Thyroid gland (tissue), 4 donors: ENCODE measurements at regions of chr5 and their contacts with region 1.

Region 1: DNA sequence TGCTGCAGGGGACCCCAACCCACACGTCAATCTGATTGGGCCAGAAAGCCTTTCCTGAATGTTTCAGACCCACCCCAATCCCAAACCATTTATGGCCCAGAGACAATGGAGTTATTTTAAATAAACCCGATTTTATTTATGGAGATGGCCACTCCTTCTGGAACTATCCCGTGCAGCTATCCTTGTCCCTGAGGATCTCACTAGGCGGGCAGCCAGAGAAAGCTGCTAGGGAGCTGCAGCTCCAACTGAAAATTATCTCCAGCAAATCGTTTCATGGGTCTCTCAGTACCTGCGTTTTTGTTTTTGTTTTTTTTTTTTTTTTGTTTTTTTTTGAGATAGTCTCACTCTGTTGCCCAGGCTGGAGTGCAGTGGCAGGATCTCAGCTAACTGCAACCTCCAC is 23.0 kb downstream of the C1QTNF2 start:
- DNase-seq: no peak
- H3K4me3 ChIP-seq: no peak overlapping the region
- H3K27ac ChIP-seq: no peak overlapping the region
- H3K4me1 ChIP-seq: peaks cover 0 to 4% of the 10 kb centered on the region in 2 donors
- H3K27me3 ChIP-seq: no peaks in the 10 kb centered on the region
- CTCF ChIP-seq: no peak
- POLR2A ChIP-seq: no peak

Region 2: GRCh38 chr5:160021831-160022446 is 325.5 kb before region 1 on chr5:
- intact Hi-C with region 1: loop called (anchors 5 kb)
- DNase-seq: peak; percentile 42 to 49
- H3K4me3 ChIP-seq: no peak overlapping the region
- H3K27ac ChIP-seq: no peak overlapping the region
- H3K4me1 ChIP-seq: peaks cover 7 to 15% of the 10 kb centered on the region in 2 donors
- H3K27me3 ChIP-seq: no peaks in the 10 kb centered on the region
- CTCF ChIP-seq: peak; percentile 64 to 89 (median 79)
- POLR2A ChIP-seq: no peak

Region 3: GRCh38 chr5:160199410-160199911 is 148.0 kb before region 1 on chr5:
- intact Hi-C with region 1: loop called (anchors 2 kb)
- DNase-seq: peak; percentile 66 to 69
- H3K4me3 ChIP-seq: peak overlapping the region in 1 of 3 donors; percentile 25
- H3K27ac ChIP-seq: no peak overlapping the region
- H3K4me1 ChIP-seq: peaks cover 0 to 11% of the 10 kb centered on the region in 2 donors
- H3K27me3 ChIP-seq: no peaks in the 10 kb centered on the region
- CTCF ChIP-seq: peak; percentile 47 to 96 (median 92)
- POLR2A ChIP-seq: no peak

Region 4: GRCh38 chr5:161001604-161002003 is 654.2 kb after region 1 on chr5:
- intact Hi-C with region 1: no loop called
- DNase-seq: no peak
- H3K4me3 ChIP-seq: no peak overlapping the region
- H3K27ac ChIP-seq: no peak overlapping the region
- H3K4me1 ChIP-seq: no peaks in the 10 kb centered on the region
- H3K27me3 ChIP-seq: no peaks in the 10 kb centered on the region
- CTCF ChIP-seq: no peak
- POLR2A ChIP-seq: no peak